Activated T-helper 1 cell treated with anti-CD3 and anti-CD28 coated beads, Interleukin-12 subunit alpha, Interleukin-12 subunit beta, Interleukin-2, Interleukin-4 antibody, amounts not matched to agents 30 ng/mL and 10 ng/mL and 1 ng/mL, durations not matched to agents 14 hours and 24 hours and 36 hours (primary cell): ENCODE measurements at regions of chr3 and their contacts with region 1.

Region 1: DNA sequence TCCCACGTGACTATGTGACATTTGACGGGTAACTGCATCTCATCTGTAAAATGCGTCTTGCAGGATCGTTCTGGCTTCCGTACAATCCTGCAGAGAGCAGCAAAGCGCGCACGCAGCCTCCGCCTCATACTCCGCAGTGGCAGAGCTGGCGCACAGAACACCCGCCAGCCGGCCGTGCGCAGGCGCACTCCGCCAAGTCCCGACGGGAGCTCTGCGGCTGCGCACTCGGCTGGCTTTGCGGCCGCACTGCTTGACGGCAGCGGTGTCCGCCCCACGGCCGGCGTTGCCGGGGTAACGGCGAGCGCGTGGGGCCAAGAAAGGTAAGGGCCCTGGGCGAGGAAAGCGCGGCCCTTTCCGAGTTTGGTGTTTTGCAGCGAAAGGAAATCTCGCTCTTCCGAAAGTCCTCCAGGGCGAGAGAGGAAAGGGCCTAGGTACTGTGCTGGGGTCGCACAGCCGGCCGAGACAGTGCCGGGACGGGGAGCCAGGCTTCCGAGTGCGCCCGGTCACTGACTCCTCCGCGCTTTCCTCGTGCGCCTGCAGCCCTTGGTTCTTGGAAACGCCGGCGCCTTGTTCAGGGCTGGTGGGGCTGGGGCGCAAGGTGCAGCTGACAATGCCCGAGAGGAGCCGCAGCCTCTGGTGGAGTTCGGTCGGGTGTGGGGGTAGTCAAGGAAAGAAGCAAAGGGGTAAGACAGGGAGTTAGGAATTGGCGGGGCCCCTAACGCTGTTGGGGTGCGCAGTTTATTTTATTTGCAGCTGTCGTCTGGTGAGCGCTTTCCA is at the start of gene TSEN2:
- DNase-seq: peak; percentile 97
- H3K4me3 Mint-ChIP-seq: peak within 1 kb of the TSS; percentile 100
- H3K27ac Mint-ChIP-seq: peak within 1 kb of the TSS; percentile 98
- H3K4me1 Mint-ChIP-seq: peaks cover 40% of the 10 kb centered on the region
- H3K27me3 Mint-ChIP-seq: no peaks in the 10 kb centered on the region
- total RNA-seq, gene TSEN2: 33.4 and 33.5 TPM in 2 replicates

Region 2: DNA sequence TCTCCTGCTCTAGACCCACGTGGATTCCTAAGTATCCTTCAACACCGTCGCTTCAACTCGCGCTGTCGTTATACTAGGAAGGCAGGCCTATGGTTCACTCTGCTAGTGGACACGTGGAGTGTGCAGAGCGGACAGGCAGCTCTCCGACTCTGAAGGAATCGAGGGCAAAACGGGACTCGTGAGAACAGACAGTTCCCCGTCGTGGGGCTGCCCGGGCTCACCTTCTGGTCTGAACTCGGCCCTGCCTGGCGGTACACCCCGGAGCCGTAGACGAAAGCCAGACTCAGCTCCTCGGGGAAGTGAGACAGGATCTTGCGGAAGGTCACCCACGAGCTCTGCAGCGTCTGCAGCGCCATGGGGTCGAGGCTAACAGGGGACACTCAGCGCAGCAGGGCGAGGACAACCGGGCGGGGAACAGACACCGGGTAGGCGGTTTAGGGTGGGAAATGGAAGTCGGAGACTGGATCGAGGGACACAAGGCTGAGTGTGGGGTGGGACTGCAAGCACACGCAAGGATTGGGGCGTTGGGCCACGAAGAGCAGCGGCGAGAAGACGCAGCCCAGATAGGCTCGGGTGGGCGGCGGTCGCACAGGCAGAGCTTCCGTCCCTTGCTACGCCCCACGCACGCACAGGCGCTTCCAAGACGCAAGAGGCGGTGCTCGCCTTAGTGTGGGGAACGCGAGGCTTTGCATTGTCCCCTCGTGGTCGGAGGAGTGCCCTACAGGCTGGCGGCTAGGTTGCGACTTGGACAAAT is 637.9 kb before region 1 on chr3 and contains the start of gene TAMM41:
- intact Hi-C with region 1: loop called (anchors 2 kb)
- DNase-seq: peak; percentile 86
- H3K4me3 Mint-ChIP-seq: peak within 1 kb of the TSS; percentile 96
- H3K27ac Mint-ChIP-seq: peak within 1 kb of the TSS; percentile 93
- H3K4me1 Mint-ChIP-seq: peaks cover 26% of the 10 kb centered on the region
- H3K27me3 Mint-ChIP-seq: no peaks in the 10 kb centered on the region
- total RNA-seq, gene TAMM41: 35.2 and 38.0 TPM in 2 replicates

Region 3: GRCh38 chr3:12175844-12176453 is 308.4 kb before region 1 on chr3:
- intact Hi-C with region 1: loop called (anchors 1 kb)
- DNase-seq: no peak
- H3K4me3 Mint-ChIP-seq: no peak overlapping the region
- H3K27ac Mint-ChIP-seq: no peak overlapping the region
- H3K4me1 Mint-ChIP-seq: peaks cover 48% of the 10 kb centered on the region
- H3K27me3 Mint-ChIP-seq: no peaks in the 10 kb centered on the region

Region 4: GRCh38 chr3:12384451-12385233 is 99.7 kb before region 1 on chr3:
- intact Hi-C with region 1: no loop called
- DNase-seq: no peak
- H3K4me3 Mint-ChIP-seq: no peak overlapping the region
- H3K27ac Mint-ChIP-seq: no peak overlapping the region
- H3K4me1 Mint-ChIP-seq: no peaks in the 10 kb centered on the region
- H3K27me3 Mint-ChIP-seq: peaks cover 20% of the 10 kb centered on the region

Region 5: DNA sequence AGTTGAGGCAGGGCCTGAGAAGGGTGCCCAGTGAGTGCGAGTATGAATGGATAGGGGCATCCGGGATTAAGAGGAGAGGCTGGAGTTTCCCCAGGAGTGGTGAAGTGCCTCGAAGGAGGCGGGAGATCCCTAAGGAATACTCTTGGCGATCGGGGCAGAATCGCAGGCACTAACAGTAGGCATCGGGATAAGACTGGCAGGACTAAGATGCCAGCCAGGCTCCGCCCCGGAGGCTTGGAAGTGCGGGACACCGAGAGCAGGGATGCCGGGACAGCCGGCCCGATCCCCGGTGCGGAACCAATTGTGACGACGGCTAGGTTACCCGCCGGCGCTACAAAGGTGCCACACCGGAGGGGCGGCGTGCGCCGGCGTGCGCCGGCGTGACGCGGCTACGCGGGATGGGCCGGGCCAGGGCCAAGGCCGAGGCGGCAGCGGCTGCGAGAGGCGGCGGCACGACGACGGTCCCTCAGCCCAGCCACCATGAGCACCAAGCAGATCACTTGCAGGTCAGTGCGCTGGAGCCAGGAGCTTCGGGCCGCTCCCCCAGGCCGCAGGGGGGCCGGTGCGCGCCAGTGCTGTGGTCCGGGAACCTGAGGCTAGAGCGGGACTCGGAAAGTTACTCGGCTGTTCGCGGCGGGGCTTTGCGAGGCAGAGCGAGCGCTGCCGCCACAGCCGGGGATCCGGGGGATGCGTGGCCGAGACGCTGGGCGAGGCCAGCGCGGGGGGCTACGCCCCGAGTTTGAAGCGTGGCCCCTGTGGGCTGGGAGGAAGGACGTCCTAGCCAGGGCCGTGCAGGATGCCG is 72.5 kb after region 1 on chr3 and contains the start of gene MKRN2:
- intact Hi-C with region 1: loop called (anchors 1 kb)
- DNase-seq: peak; percentile 79
- H3K4me3 Mint-ChIP-seq: peak within 1 kb of the TSS; percentile 91
- H3K27ac Mint-ChIP-seq: peak within 1 kb of the TSS; percentile 88
- H3K4me1 Mint-ChIP-seq: peaks cover 67% of the 10 kb centered on the region
- H3K27me3 Mint-ChIP-seq: peaks cover 27% of the 10 kb centered on the region
- total RNA-seq, gene MKRN2: 28.5 and 28.6 TPM in 2 replicates

Region 6: GRCh38 chr3:12891985-12892839 is 407.8 kb after region 1 on chr3:
- intact Hi-C with region 1: loop called (anchors 5 kb)
- DNase-seq: peak; percentile 16
- H3K4me3 Mint-ChIP-seq: no peak overlapping the region
- H3K27ac Mint-ChIP-seq: no peak overlapping the region
- H3K4me1 Mint-ChIP-seq: peaks cover 5% of the 10 kb centered on the region
- H3K27me3 Mint-ChIP-seq: peaks cover 39% of the 10 kb centered on the region